ENCODE measurements at regions of chr14 and their contacts with region 1.

Region 1: GRCh38 chr14:34072921-34073320 is 122.0 kb upstream of the EGLN3 start:
- DNase-seq: no peak

Region 2: DNA sequence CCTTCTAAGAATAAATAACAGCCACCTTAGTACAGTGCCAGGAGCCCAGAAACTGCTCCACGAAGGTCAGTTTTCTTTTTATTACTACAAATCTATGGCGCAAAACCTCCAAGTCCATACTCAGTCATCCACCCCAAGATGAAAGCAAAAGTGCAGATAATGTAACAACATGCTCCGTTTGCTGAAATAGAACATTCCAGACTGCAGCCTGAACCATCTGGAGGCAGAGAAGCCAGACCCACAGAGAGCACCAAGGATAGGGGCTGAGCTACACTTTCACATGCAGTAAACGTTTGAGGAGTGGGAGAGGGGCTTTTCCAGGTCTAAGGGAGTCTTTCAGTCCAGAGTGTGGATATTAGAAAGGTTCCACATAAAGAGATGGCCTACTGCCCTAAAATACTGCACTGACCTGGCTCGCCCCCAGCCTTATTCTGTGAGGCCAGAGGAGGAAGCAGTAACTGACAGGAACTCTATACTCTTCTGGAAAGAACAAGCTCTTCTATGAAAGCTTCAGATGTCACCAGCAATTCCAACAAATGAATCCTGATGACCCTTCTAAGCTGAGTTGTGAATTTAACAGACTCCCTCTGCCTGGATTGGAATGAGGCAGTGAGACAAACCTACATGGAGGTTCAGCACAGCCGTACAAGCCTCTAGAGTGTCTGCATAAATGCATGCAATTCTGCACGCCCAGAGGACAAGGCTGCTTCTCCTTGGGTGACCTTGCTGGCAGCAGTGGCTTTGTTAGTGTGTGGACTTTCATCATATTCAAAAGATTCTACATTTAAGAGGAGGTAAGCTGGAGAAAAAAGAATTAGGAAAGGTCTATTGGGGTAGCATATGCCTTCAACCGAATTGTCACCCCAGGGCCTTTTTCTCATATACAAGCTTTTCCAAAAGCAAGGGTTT is 31.8 kb after region 1 on chr14:
- intact Hi-C with region 1: no loop called
- DNase-seq: no peak

Region 3: DNA sequence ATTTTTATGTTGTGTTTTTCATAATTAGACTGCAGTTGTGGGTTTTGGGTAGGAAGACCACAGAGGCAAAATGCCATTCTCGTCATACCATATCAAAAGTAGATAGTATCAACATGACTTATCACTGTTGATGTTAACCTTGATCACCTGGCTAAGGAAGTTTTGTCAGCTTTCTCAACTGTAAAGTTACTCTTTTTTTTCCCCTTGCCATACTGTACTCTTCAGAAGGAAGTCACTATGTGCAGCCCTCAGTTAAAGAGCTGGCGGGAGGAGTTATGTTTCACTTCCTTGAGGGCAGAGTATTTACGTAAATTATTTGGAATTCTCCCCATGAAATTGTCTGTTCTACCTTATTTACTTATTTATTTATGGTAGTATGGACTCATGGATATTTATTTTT is 1128.1 kb after region 1 on chr14:
- intact Hi-C with region 1: loop called in 1 of 2 experiments (anchors 5 kb)
- DNase-seq: no peak

Measured in posterior vena cava (tissue), 2 donors.